PC-3 (cell line): ENCODE measurements at regions of chr2 and their contacts with region 1.

Region 1: GRCh38 chr2:69770193-69771146 is 28.5 kb downstream of the ANXA4 start:
- DNase-seq: peak; percentile 94
- ATAC-seq: peak; percentile 90
- H3K4me3 ChIP-seq: peak overlapping the region; percentile 34; the same call in 1 of the 2 replicates
- H3K27ac ChIP-seq: peak overlapping the region; percentile 91
- H3K4me1 ChIP-seq: peaks cover 71% of the 10 kb centered on the region
- H3K27me3 ChIP-seq: no peaks in the 10 kb centered on the region
- CTCF ChIP-seq: no peak

Region 2: DNA sequence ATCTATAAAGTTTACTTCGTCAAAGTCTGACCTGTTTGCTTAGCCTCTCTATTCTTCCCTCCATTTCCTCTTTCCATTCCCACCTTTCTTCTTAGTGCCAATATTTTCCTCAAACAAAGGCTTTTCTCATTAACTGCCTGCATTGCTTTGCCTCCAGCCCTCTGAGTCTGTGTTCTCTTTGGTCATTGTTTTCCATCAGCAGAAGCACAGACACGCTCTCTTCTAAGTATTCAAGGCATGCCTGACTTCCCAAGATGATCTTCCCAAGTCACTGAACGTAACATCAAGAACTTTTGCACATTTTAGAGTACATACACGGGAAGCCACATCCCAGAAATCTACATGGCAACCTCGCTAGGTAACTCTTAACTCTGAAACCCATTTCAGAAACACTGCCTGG is 61.2 kb before region 1 on chr2:
- CTCF ChIA-PET with region 1: no interaction called
- POLR2A ChIA-PET with region 1: interaction called, 23 read pairs
- intact Hi-C with region 1: no loop called
- DNase-seq: no peak
- ATAC-seq: no peak
- H3K4me3 ChIP-seq: no peak overlapping the region
- H3K27ac ChIP-seq: no peak overlapping the region
- H3K4me1 ChIP-seq: peaks cover under 1% of the 10 kb centered on the region; the same call in 1 of the 2 replicates
- H3K27me3 ChIP-seq: no peaks in the 10 kb centered on the region
- CTCF ChIP-seq: no peak

Region 3: GRCh38 chr2:69755862-69756467 is 14.5 kb before region 1 on chr2:
- CTCF ChIA-PET with region 1: no interaction called
- POLR2A ChIA-PET with region 1: no interaction called
- intact Hi-C with region 1: loop called (anchors 1 kb)
- DNase-seq: peak; percentile 97
- ATAC-seq: peak; percentile 98
- H3K4me3 ChIP-seq: peak overlapping the region; percentile 47
- H3K27ac ChIP-seq: peak overlapping the region; percentile 83
- H3K4me1 ChIP-seq: peaks cover 15% of the 10 kb centered on the region
- H3K27me3 ChIP-seq: no peaks in the 10 kb centered on the region
- CTCF ChIP-seq: no peak

Region 4: DNA sequence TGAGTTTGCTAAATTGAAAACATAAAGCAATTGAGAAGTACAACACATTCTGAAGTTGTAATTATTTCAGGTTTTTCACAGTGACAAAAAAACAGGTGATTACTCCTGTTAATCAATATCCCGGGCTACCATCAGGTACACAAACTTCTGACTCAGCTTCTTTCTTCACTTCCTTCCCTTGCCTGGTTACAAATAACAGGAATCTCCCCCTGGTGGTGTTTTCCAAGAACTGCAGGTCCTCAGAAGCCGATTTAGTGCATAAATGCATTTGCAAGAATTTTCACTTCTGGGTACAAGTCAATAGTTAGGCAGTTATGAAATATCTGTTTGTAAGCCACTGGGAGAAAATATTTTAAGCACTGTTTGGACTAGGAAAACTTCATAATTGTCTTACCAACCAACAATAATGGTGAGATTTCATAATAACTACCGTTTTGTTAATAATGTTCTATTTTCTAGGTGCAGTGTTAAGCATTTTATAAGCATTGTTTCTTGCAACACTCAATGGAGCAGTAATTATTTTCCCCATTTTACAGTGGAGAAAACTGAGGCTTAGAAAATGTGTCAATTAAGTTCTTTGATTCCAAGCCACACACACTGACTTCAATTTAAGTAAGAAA is 46.6 kb after region 1 on chr2:
- CTCF ChIA-PET with region 1: no interaction called
- POLR2A ChIA-PET with region 1: no interaction called
- intact Hi-C with region 1: loop called (anchors 5 kb)
- DNase-seq: peak; percentile 97
- ATAC-seq: peak; percentile 56
- H3K4me3 ChIP-seq: no peak overlapping the region
- H3K27ac ChIP-seq: no peak overlapping the region
- H3K4me1 ChIP-seq: peaks cover 13% of the 10 kb centered on the region
- H3K27me3 ChIP-seq: no peaks in the 10 kb centered on the region
- CTCF ChIP-seq: peak; percentile 94